Colonic mucosa (tissue), 4 donors: ENCODE measurements at regions of chr6 and their contacts with region 1.

Region 1: DNA sequence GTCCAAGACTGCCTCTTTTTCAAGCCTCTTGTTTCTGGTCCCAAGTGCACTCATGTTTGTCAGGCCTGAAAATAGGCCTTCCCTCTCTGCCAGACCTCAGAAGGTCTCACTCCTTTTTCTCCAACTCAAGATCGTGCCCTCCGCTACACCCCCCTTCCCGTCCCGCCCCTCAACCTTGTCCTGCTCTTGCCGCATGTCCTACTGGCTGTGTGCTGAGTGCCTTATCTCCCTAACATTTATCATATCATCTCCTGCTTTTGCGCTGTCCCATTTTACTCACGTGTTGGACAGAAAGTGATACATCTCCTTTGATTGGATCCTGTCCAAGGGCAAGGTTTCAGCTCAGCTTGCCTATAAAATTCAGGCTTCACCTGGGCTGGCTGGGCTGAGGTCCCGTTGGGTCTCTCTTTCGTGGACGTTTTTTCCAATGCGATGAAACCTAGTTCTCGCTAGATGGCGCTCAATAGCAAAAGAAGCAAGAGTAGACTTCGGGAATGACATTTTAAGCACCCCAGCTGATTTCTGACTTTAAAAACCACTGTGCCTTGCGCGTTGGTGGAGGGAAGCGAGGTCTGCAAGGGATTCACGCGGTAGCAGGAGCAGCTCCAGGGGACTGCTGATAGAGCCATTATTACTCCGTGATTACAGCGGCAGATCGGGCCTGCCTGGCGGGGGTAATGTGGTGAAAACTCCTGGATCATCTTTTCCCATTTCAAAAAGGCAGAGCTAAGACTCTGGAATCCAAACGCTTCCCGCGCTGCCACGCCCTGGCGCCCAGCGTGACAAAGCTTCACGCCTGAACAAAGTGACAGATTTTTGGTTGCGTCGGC is 137.6 kb downstream of the IMPG1 start:
- DNase-seq: peak; percentile 37
- H3K4me3 ChIP-seq: peak overlapping the region; percentile 32
- H3K27ac ChIP-seq: no peak overlapping the region
- H3K4me1 ChIP-seq: no peaks in the 10 kb centered on the region
- H3K27me3 ChIP-seq: no peaks in the 10 kb centered on the region
- CTCF ChIP-seq: peak; percentile 69

Region 2: DNA sequence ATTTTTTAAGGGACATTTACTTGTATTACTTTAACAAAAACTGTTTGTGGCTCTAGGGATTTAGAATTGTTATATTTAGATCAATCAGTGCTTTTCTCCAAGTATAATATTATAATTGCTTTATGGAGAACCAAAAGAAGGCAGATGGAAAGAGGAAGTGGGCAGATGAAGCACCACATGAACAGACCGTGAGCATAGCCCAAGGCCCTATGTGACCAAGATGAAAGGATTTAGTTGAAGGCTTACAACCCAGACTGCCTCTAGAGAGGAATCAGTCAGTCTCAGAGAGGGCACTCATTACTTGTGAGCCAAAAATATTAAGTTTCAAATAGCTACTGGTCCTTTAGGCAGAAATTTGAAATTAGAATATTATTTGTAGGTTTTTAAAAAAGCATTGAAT is 239.9 kb after region 1 on chr6:
- intact Hi-C with region 1: no loop called
- DNase-seq: no peak
- H3K4me3 ChIP-seq: no peak overlapping the region
- H3K27ac ChIP-seq: no peak overlapping the region
- H3K4me1 ChIP-seq: no peaks in the 10 kb centered on the region
- H3K27me3 ChIP-seq: no peaks in the 10 kb centered on the region
- CTCF ChIP-seq: no peak

Region 3: GRCh38 chr6:77457720-77458349 is 1523.0 kb after region 1 on chr6:
- intact Hi-C with region 1: loop called (anchors 5 kb)
- DNase-seq: peak; percentile 59
- H3K4me3 ChIP-seq: no peak overlapping the region
- H3K27ac ChIP-seq: no peak overlapping the region
- H3K4me1 ChIP-seq: no peaks in the 10 kb centered on the region
- H3K27me3 ChIP-seq: peaks cover 13% of the 10 kb centered on the region
- CTCF ChIP-seq: peak; percentile 63